Stomach (tissue), 19 donors: ENCODE measurements at regions of chr6 and their contacts with region 1.

Region 1: DNA sequence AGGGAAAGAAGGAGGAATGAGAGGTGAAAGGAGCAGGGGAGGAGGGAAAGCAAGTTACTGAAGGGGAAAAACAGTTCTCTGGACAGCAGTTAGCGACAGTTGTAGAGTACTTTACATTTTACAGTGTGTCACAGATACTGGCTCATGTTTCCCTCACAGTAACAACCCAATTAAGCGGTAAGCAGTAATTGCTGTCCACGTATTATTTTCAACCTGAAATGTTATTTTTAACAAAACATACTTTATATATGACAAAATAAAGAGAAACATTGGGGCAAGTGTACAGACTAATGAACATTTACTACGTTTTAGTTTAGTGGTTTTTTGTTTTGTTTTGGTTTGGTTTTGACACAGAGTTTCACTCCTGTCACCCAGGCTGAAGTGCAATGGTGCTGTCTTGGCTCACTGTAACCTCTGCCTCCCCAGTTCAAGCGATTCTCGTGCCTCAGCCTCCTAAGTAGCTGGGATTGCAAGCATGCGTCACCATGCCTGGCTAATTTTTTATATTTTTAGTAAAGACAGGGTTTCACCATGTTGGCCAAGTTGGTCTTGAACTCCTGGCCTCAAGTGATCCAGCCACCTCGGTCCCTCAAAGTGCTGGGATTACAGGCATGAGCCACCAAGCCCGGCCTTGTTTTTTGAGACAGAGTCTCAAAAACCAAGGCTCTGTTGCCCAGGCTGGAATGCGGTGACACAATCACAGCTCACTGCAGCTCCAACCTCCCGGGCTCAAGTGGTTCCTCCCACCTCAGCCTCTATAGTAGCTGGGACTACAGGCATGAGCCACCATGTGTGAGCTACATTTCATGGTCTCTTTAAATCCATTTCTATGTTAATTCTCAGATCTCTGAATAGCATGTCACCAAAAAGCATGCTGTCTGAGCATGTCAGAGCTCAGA is 22.6 kb upstream of the BTN3A2 start:
- DNase-seq: no peak
- H3K4me3 ChIP-seq: no peak overlapping the region
- H3K27ac ChIP-seq: no peak overlapping the region
- H3K4me1 ChIP-seq: peaks cover 0 to 10% (median 6%) of the 10 kb centered on the region in 4 donors
- H3K27me3 ChIP-seq: peaks cover 4 to 28% (median 4%) of the 10 kb centered on the region in 3 donors
- CTCF ChIP-seq: no peak
- EP300 ChIP-seq: no peak
- POLR2A ChIP-seq: no peak

Region 2: DNA sequence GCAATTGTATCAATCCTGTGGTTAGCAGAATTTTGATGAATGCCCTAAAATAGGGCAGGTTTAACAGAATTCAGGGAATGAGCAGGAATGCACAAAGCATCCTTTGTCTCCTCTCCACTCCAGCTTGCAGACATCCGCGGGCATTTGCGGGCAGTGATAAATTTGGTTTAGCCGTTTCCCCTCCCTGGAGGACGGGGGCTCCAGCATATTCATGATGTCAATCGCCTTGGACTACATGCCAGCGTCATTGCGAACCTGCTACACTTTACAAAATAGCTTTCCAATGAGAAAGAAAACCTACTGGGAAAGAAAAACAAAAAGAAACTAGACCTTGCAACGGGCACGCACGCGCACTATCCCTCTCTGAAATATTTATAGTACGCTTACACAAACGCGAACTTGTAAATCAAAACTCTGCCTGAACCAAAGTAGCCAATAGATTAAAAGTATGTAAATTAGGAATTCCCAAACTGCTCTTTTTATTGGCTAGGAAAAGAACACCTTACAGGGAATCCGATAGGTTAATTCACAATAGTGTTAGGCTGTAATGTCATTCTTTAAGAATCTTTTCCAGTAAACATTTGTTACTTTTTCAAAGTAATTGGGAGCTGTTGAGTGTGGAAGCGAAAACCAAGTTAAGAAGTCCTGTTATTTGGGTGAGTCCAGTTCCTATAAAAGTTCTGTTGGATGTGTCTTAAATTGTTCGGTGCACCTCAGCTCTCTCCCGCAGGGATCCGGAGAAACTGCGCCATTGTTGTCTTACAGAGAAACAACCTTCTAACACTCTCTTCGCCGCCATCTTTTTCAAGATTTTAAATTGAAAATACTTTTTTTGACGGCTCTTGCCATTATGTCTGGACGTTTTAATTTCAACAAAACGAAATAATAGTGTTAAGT is 118.5 kb before region 1 on chr6:
- intact Hi-C with region 1: no loop called
- DNase-seq: peak; percentile 75 to 95
- H3K4me3 ChIP-seq: peak overlapping the region; percentile 42 to 50 (median 45)
- H3K27ac ChIP-seq: peak overlapping the region; percentile 77 to 96 (median 87)
- H3K4me1 ChIP-seq: peaks cover 0 to 15% (median 7%) of the 10 kb centered on the region in 4 donors
- H3K27me3 ChIP-seq: peaks cover 0 to 86% (median 10%) of the 10 kb centered on the region in 3 donors
- CTCF ChIP-seq: no peak
- EP300 ChIP-seq: no peak
- POLR2A ChIP-seq: no peak

Region 3: DNA sequence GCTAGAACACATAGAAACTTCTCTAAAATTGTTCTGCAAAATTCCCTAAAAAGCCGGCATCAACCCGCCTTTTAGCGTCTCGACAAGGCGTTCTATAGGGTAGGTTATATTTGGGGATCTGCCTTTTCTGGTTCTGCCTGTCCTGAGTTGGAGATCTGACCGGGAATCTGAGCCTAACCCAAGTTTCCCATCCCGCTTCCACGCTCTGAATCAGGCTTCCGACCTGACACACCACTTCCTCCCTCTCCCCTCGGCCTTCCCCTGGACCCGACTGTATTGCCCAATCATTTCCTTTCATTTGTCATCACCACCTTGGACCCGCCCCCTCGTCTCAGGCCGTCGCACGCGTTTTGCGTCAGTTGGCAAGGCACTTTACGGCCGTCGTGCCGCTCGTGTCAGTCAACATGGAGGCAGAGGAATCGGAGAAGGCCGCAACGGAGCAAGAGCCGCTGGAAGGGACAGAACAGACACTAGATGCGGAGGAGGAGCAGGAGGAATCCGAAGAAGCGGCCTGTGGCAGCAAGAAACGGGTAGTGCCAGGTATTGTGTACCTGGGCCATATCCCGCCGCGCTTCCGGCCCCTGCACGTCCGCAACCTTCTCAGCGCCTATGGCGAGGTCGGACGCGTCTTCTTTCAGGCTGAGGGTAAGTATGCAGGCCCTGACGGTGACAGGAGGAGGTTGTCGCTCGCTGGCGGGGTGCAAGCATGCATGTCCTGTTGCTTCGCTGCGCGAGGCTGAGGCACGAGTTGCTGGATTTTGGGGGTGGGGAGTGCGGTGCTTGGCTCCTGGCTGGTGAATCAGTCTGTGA is 254.4 kb after region 1 on chr6 and contains the start of gene ABT1:
- intact Hi-C with region 1: loop called (anchors 10 kb)
- DNase-seq: peak; percentile 98 to 99
- H3K4me3 ChIP-seq: peak within 1 kb of the TSS; percentile 73 to 99 (median 92)
- H3K27ac ChIP-seq: peak within 1 kb of the TSS; percentile 79 to 94 (median 90)
- H3K4me1 ChIP-seq: peaks cover 9 to 33% (median 25%) of the 10 kb centered on the region in 4 donors
- H3K27me3 ChIP-seq: peaks cover 0 to 34% (median 17%) of the 10 kb centered on the region in 3 donors
- CTCF ChIP-seq: peak in 1 of 7 experiments; percentile 40
- EP300 ChIP-seq: peak; percentile 19
- POLR2A ChIP-seq: peak in 2 of 4 donors; percentile 55 to 56
- total RNA-seq, gene ABT1: 7.2 to 16.9 (median 14.0) TPM in 4 of 5 donors, not detected in the other